Activated naive CD4-positive, alpha-beta T cell treated with anti-CD3 and anti-CD28 coated beads for 36 hours (primary cell): ENCODE measurements at regions of chr5 and their contacts with region 1.

Region 1: DNA sequence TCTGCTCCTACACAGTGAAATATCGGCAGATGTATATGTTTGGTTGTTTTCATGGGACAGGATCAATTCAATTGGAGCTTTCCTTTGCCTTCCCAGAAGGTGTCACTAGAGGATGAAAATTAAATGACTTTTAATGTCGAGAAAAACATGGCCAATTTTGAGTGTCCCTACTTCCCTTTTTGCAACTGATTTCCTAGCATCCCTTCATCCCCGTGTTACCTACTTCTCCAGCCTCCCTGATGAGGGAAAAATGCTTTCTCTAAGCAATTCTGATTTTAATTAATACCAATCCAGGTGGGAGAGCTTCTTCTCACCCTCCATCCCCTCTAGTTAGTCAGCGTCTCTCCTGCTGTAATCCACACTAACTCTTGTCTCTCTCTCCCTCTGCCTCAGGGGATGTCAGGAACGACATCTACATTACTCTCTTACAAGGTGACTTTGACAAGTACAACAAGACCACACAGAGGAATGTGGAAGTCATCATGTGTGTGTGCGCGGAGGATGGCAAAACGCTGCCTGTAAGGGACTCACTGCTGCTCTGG is 64.9 kb downstream of the DOCK2 start:
- DNase-seq: no peak
- H3K4me3 Mint-ChIP-seq: no peak overlapping the region
- H3K27ac Mint-ChIP-seq: peak overlapping the region; percentile 59
- H3K4me1 Mint-ChIP-seq: peaks cover 41% of the 10 kb centered on the region
- H3K27me3 Mint-ChIP-seq: no peaks in the 10 kb centered on the region

Region 2: DNA sequence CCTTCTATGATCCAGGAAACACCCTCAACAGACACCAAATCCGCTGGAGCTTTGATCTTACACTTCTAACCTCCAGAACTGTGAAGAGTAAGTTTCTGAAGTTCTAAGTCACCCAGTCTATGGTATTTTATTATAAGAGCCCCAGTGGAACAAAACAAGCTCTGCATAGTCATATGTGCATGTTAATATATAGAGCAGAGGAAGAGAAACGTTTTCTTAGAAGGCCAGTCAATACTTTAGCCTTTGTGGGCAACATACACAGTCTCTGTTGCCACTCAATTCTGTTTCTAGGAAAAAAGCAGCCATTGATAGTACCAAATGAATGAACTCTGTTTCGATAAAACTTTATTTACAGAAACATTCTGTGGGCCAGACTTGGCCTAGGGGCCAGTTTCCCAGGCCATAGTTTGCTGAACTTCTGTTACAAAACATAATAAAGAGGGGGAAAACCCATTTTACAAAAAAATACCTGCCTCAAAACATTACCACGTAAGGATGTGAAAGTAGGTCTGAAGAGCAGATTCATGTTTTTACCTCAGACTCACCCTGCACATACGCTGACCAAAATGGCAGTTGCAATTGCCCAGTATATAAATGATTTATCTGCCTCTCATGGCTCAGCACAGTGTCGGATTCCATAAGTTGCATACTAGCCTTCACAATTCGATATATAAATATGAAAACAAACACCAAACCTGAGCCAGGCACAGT is 751.6 kb before region 1 on chr5:
- CTCF ChIA-PET with region 1: no interaction called
- intact Hi-C with region 1: no loop called
- DNase-seq: no peak
- H3K4me3 Mint-ChIP-seq: no peak overlapping the region
- H3K27ac Mint-ChIP-seq: no peak overlapping the region
- H3K4me1 Mint-ChIP-seq: no peaks in the 10 kb centered on the region
- H3K27me3 Mint-ChIP-seq: no peaks in the 10 kb centered on the region

Region 3: DNA sequence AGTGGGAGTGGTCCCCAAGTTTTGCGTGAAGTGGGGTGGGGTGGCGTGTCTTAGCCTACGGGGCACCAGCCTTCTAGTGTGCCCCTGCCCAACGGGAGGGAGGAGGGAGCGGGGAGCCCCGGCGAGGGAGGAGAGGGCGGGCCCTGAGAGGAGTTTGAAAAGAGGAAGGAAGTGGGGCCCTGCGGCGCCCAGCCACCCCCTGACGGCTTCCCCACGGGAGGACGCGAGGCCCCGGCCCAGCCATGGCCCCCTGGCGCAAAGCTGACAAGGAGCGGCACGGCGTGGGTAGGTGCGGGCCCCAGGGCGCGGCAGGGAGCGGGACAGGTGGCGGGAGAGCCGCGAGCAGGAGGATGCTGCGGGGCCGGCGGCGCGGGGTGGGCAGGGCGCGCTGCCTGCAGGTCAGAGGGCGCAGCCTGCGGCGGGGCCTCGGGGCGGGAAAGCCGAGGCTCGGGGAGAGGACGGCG is 64.9 kb before region 1 on chr5 and contains the start of gene DOCK2:
- CTCF ChIA-PET with region 1: interaction called, 3 read pairs
- intact Hi-C with region 1: loop called (anchors 1 kb)
- DNase-seq: peak; percentile 74
- H3K4me3 Mint-ChIP-seq: peak within 1 kb of the TSS; percentile 93
- H3K27ac Mint-ChIP-seq: peak within 1 kb of the TSS; percentile 95
- H3K4me1 Mint-ChIP-seq: peaks cover 47% of the 10 kb centered on the region
- H3K27me3 Mint-ChIP-seq: no peaks in the 10 kb centered on the region
- total RNA-seq, gene DOCK2: 192 to 203 TPM

Region 4: DNA sequence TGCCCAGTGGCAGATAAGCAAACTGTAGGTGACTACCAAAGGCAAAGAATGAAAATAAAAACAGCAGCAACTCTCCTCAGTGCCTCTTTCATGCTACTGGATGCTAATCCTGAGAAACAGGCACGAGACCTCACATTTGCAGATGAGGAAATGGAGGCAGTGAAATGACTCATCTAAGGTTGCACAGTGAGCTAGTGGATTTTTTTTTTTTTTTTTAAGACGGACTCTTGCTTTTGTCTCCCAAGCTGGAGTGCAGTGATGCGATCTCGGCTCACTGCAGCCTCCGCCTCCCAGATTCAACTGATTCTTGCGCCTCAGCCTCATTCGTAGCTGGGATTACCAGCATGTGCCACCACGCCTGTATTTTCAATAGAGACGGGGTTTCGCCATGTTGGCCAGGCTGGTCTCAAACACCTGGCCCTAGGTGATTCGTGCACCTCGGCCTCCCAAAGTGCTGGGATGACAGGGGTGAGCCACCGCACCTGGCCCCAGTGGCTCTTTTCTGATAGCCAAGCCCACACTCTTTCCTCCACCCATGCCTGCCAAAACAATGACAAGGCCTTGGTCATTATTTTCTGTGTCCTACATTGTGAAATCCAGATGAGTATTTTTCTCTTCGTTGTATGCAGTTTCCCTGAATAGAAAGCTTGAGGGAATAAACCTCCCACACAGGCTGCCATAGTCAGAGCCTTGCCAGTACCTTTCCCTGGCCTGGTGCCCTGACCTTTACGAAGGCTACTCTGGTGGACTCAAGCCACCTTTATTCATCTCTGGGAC is 45.7 kb before region 1 on chr5:
- CTCF ChIA-PET with region 1: no interaction called
- intact Hi-C with region 1: loop called (anchors 1 kb)
- DNase-seq: peak; percentile 61
- H3K4me3 Mint-ChIP-seq: peak overlapping the region; percentile 29
- H3K27ac Mint-ChIP-seq: peak overlapping the region; percentile 77
- H3K4me1 Mint-ChIP-seq: peaks cover 61% of the 10 kb centered on the region
- H3K27me3 Mint-ChIP-seq: no peaks in the 10 kb centered on the region

Region 5: DNA sequence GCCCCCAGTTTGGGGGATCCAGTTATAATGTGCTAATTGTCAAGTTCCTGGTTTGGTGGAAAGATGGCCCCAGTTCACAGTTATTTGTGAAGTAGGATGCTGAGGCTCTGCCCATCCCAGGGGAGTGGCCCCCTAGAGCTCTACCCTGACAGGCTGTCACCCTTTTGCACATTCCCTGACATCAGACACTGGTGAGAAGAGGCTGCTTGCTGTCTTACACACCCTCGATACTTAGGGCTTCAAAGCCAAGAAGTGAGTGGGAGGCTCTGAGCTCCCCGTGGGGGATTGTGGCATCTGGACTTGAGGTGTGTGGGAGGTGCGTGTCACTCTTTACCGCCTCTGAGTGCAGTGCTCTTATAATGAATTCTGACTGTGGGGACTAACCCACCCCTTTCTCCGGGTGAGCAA is 103.5 kb after region 1 on chr5:
- CTCF ChIA-PET with region 1: interaction called, 4 read pairs
- intact Hi-C with region 1: loop called (anchors 1 kb)
- DNase-seq: peak; percentile 81
- H3K4me3 Mint-ChIP-seq: peak overlapping the region; percentile 1
- H3K27ac Mint-ChIP-seq: peak overlapping the region; percentile 92
- H3K4me1 Mint-ChIP-seq: peaks cover 38% of the 10 kb centered on the region
- H3K27me3 Mint-ChIP-seq: no peaks in the 10 kb centered on the region

Region 6: GRCh38 chr5:170070556-170071412 is 368.8 kb after region 1 on chr5:
- CTCF ChIA-PET with region 1: no interaction called
- intact Hi-C with region 1: loop called (anchors 5 kb)
- DNase-seq: no peak
- H3K4me3 Mint-ChIP-seq: no peak overlapping the region
- H3K27ac Mint-ChIP-seq: no peak overlapping the region
- H3K4me1 Mint-ChIP-seq: peaks cover under 1% of the 10 kb centered on the region
- H3K27me3 Mint-ChIP-seq: no peaks in the 10 kb centered on the region

Region 7: DNA sequence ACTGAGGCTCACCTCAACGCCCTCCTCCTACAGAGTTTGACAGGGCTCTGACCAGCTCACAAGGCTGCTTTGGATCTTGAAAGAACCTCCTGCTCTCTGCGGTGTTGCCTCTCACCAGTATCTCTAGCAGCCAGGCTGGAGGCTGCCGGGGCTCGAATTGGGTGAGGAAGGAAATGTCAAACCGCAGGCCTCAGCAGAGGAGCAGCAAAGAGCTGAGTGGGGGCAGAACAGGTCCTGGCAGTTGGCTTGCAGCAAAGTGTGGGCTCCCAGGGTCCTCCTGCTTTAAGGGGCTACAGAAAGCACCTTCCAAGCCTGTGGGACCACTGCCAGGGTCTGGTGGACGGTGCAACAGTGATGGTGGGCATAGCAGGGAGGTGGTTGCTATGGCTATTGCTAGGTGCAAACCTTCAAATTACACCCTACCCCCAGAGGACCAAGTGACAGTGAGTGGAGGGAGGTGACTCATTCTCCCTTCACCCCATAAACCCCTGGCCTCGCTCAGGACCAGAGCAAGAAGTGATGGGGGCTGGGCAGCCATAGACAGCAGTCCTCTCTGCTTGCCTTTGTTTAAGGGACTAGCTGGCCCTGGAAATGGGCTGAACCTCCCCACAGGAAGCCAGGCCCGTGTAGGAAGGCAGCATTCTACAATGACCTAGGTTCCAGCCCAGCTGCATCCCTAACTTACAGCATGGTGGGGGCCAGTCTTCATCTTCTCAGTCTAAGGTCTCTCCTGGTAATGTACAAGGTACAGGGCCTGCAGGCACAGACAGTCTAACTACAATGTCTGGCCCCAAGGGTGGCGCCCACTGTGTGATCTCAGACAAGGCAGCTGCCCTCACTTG is 576.9 kb after region 1 on chr5:
- CTCF ChIA-PET with region 1: no interaction called
- intact Hi-C with region 1: loop called (anchors 5 kb)
- DNase-seq: peak; percentile 90
- H3K4me3 Mint-ChIP-seq: peak overlapping the region; percentile 45
- H3K27ac Mint-ChIP-seq: peak overlapping the region; percentile 83
- H3K4me1 Mint-ChIP-seq: peaks cover 95% of the 10 kb centered on the region
- H3K27me3 Mint-ChIP-seq: no peaks in the 10 kb centered on the region